ENCODE measurements at regions of chr5 and their contacts with region 1.

Region 1: GRCh38 chr5:171850324-171851285 is 65.0 kb downstream of the SMIM23 start:
- DNase-seq: peak in 1 of 2 experiments; percentile 50
- H3K4me3 ChIP-seq: no peak overlapping the region
- H3K4me3 Mint-ChIP-seq: no peak overlapping the region
- H3K27ac Mint-ChIP-seq: no peak overlapping the region
- H3K4me1 ChIP-seq: no peaks in the 10 kb centered on the region
- H3K4me1 Mint-ChIP-seq: peaks cover 10% of the 10 kb centered on the region
- H3K27me3 ChIP-seq: no peaks in the 10 kb centered on the region
- H3K27me3 Mint-ChIP-seq: no peaks in the 10 kb centered on the region
- CTCF ChIP-seq: peak; percentile 39 to 57

Region 2: GRCh38 chr5:171630027-171630669 is 220.5 kb before region 1 on chr5:
- CTCF ChIA-PET with region 1: no interaction called
- POLR2A ChIA-PET with region 1: no interaction called
- intact Hi-C with region 1: loop called (anchors 1 kb)
- DNase-seq: peak; percentile 78 to 80
- H3K4me3 ChIP-seq: no peak overlapping the region
- H3K4me3 Mint-ChIP-seq: peak overlapping the region; percentile 53
- H3K27ac Mint-ChIP-seq: no peak overlapping the region
- H3K4me1 ChIP-seq: peaks cover 11% of the 10 kb centered on the region
- H3K4me1 Mint-ChIP-seq: no peaks in the 10 kb centered on the region
- H3K27me3 ChIP-seq: no peaks in the 10 kb centered on the region; the same call in none of the 2 replicates
- H3K27me3 Mint-ChIP-seq: peaks cover 11% of the 10 kb centered on the region
- CTCF ChIP-seq: peak; percentile 58 to 71

Region 3: DNA sequence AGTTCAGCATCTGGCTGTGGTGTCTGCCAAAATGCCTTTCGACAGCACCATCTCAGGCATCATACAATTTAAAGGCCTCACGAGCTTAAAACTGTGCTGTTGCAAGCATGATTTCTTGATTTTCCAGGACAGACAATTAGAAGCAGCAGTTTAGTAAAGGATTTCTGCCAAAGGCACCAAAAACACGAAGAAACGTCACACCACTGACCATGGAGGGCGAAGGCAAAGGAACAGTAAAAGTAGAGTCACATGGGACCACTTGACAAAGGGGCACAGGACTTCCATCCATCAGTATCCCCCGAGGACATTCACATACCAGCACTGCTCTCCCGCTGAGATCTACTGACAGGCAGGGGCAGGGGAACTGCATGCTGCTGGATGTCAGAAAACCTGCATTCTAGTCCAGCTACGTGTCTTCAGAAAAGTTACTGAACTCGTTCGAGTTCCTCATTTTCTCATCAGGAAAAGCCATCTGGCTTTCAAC is 226.2 kb after region 1 on chr5:
- CTCF ChIA-PET with region 1: no interaction called
- POLR2A ChIA-PET with region 1: no interaction called
- intact Hi-C with region 1: no loop called
- DNase-seq: no peak
- H3K4me3 ChIP-seq: no peak overlapping the region
- H3K4me3 Mint-ChIP-seq: no peak overlapping the region
- H3K27ac Mint-ChIP-seq: no peak overlapping the region
- H3K4me1 ChIP-seq: peaks cover 5% of the 10 kb centered on the region
- H3K4me1 Mint-ChIP-seq: peaks cover 6% of the 10 kb centered on the region
- H3K27me3 ChIP-seq: no peaks in the 10 kb centered on the region
- H3K27me3 Mint-ChIP-seq: no peaks in the 10 kb centered on the region
- CTCF ChIP-seq: no peak

Measured in Caco-2 (cell line).